Dendritic cell treated with granulocyte-macrophage colony-stimulating factor and Interleukin-4, amounts not matched to agents 40 ng/mL and 50 ng/mL, for 4 days (primary cell): ENCODE measurements at regions of chr1 and their contacts with region 1.

Region 1: DNA sequence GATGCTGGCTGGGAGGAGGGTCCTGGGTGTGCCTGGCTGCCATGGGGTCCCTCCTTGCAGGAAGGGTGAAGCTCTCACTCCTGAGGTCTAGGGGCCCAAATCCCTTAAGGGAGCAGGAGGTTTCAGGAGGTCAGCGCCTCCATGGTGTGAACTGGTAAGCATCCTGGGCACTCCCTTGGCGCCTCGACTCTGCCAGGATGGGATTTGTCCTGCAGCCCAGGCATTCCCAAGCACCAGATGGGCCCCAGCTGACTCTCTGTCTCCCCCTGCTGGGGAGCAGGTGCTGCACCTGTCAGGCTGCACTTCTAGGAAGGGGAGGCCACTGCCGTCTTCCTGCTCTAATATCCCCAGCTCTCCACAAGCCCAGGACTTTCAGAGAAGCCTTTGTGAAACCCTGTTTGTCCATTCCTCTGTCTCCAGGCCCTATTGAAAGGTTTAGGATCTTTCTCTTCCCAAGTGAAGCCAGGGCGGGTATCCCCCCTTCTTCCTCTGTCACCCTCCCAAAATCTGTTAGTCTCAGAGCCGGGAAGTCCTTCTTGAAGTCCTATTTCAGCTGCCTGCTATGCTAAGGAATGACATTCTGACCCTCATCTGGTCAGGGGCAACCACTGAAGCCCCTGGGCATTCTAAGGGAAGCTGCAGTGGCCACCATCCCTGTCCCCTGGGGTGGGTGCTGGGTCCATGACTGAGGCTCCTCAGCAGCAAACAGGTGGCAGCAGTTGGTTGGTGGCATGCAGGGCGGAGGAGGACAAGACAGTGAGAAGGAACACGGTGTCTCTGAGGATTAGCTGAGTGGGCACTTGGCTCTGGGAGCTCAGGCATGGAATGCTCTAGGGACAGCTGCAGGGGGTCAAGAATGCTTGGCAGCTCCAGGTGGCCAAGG is 3.3 kb downstream of the MYBPH start:
- H3K4me3 Mint-ChIP-seq: no peak overlapping the region
- H3K27ac Mint-ChIP-seq: peak overlapping the region; percentile 19
- H3K4me1 Mint-ChIP-seq: peaks cover 43% of the 10 kb centered on the region
- H3K27me3 Mint-ChIP-seq: peaks cover 59% of the 10 kb centered on the region

Region 2: GRCh38 chr1:203038891-203039608 is 133.3 kb before region 1 on chr1:
- intact Hi-C with region 1: loop called (anchors 1 kb)
- H3K4me3 Mint-ChIP-seq: no peak overlapping the region
- H3K27ac Mint-ChIP-seq: no peak overlapping the region
- H3K4me1 Mint-ChIP-seq: peaks cover 24% of the 10 kb centered on the region
- H3K27me3 Mint-ChIP-seq: peaks cover 43% of the 10 kb centered on the region

Region 3: DNA sequence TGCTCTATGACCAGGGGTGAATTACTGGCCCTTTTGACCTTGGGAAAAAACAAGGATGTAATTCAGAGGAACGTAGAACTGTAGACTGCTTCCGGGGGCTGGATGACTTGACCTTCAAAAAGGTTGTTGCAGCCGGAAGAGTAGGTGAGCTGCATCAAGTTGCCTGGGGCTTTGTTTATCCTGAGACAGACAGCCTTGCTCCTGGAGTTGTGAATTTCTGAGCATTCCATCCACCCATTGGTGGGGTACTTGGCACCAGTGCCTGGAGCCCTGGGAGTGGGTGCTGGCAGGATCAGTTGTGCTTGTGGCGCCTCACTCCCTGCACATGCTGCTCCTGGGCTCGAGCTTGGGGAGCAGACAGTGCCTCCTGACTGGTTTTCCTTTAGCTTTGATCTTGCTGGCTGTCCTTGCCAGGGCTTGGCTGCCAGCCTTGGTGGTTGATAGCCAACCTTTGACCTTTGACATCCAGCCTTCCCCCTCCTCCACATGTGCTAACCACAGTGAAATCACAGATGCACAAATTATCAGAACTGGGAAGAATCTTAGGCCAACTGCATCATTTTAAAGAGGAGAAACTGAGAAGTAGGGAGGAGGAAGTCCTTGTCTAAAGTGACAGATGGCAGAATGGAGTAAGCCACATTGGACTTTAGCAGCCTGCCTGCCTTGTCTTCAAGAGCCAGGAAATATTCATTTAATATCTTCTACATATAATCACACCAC is 70.3 kb before region 1 on chr1:
- intact Hi-C with region 1: no loop called
- H3K4me3 Mint-ChIP-seq: no peak overlapping the region
- H3K27ac Mint-ChIP-seq: peak overlapping the region; percentile 12
- H3K4me1 Mint-ChIP-seq: peaks cover 29% of the 10 kb centered on the region
- H3K27me3 Mint-ChIP-seq: peaks cover 7% of the 10 kb centered on the region

Region 4: GRCh38 chr1:203117611-203118575 is 54.5 kb before region 1 on chr1:
- intact Hi-C with region 1: loop called (anchors 2 kb)
- H3K4me3 Mint-ChIP-seq: no peak overlapping the region
- H3K27ac Mint-ChIP-seq: no peak overlapping the region
- H3K4me1 Mint-ChIP-seq: peaks cover 17% of the 10 kb centered on the region
- H3K27me3 Mint-ChIP-seq: peaks cover 67% of the 10 kb centered on the region